ENCODE measurements at regions of chr12 and their contacts with region 1.

Region 1: GRCh38 chr12:108633534-108634248 is at the start of gene SELPLG:
- DNase-seq: peak; percentile 95
- H3K4me3 Mint-ChIP-seq: peak within 1 kb of the TSS; percentile 98
- H3K27ac Mint-ChIP-seq: peak within 1 kb of the TSS; percentile 99
- H3K4me1 Mint-ChIP-seq: peaks cover 73% of the 10 kb centered on the region
- H3K27me3 Mint-ChIP-seq: no peaks in the 10 kb centered on the region
- total RNA-seq, gene SELPLG: 47.4 and 49.4 TPM in 2 replicates

Region 2: DNA sequence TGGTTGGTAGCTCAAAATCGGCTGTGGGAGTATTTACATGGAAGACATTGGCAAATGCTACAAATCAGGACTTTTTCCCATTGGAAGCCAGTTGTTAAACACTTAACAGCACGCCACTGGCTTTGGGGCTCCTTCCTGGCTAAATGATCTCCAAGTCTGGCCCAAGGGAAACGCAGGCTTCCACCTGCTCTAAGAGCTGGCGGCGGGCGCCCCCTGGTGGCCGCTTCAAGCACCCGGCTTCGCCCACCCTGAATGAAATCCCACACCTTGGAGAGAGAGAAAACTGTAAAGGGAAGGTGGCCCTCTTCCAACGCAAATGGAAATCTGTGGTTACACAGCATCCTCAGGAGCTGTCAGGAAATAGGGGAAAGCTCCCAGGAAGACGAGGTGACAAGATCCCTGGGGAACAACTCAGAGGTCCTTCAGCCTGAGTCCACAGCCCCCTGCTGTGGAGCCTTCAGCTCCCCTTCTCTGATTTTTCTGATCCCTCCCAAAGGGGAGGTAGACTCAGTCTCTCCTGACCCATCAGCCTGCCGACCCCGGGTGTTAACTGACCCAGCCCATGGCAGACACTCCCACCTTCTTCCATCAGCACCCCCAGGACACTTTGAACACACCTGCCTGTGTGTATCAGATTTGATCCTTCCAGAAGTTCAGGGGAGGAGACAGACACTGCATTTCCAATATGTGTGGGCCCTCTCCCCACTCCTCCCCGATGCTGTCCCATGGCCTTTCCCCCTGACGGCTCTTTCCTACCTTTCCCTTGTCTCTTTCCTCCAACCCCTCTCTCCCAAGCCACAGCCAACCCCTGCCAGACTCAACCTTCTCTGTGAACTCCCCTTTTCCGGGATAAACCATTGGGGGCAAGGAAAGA is 15.4 kb before region 1 on chr12:
- intact Hi-C with region 1: loop called (anchors 1 kb)
- DNase-seq: peak; percentile 93
- H3K4me3 Mint-ChIP-seq: no peak overlapping the region
- H3K27ac Mint-ChIP-seq: peak overlapping the region; percentile 83
- H3K4me1 Mint-ChIP-seq: peaks cover 50% of the 10 kb centered on the region
- H3K27me3 Mint-ChIP-seq: no peaks in the 10 kb centered on the region

Region 3: DNA sequence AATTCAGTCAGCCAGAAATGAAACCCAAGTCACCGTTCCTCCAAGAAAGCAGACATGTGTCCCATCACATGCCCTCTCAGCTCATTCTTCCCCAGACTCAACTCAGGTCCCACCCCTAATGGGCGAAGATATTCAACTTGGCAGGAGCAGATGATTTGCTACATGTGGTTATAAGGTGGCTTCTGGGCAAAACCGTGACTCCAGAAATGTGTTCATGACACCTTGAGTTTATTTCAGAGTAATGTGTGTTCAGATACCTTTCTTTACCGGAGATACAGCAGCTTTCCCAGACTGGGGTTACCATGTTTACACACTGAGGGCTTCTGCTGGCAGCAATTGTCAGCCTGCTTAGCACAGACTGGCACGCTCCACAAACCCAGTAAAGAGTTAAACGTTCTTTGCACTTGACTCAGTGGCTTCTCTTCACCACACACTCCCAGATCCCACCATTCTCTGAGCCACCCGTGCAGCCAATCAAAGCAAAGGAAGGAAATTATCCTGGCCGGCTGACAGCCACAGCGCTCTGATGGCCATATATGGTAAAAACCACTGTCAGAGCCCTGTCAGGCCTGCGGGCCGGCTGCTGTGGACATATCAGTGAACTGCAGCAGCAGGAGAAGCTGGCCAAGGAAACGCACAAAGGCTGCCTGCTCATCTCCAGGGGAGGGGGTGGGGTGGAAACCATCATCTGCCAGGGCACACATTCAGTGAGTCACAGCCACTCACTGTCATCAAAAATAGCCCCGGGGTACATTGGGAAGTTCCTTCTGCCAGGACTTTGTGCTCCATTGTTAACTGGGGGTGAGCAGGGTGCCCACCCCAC is 57.7 kb after region 1 on chr12:
- intact Hi-C with region 1: loop called (anchors 1 kb)
- DNase-seq: peak; percentile 88
- H3K4me3 Mint-ChIP-seq: peak overlapping the region; percentile 77
- H3K27ac Mint-ChIP-seq: peak overlapping the region; percentile 97
- H3K4me1 Mint-ChIP-seq: peaks cover 66% of the 10 kb centered on the region
- H3K27me3 Mint-ChIP-seq: no peaks in the 10 kb centered on the region

Region 4: GRCh38 chr12:108856428-108857157 is 222.9 kb after region 1 on chr12:
- intact Hi-C with region 1: loop called (anchors 5 kb)
- DNase-seq: peak; percentile 84
- H3K4me3 Mint-ChIP-seq: peak overlapping the region; percentile 91
- H3K27ac Mint-ChIP-seq: peak overlapping the region; percentile 84
- H3K4me1 Mint-ChIP-seq: peaks cover 43% of the 10 kb centered on the region
- H3K27me3 Mint-ChIP-seq: peaks cover 1% of the 10 kb centered on the region